ENCODE measurements at regions of chr18 and their contacts with region 1.

Region 1: DNA sequence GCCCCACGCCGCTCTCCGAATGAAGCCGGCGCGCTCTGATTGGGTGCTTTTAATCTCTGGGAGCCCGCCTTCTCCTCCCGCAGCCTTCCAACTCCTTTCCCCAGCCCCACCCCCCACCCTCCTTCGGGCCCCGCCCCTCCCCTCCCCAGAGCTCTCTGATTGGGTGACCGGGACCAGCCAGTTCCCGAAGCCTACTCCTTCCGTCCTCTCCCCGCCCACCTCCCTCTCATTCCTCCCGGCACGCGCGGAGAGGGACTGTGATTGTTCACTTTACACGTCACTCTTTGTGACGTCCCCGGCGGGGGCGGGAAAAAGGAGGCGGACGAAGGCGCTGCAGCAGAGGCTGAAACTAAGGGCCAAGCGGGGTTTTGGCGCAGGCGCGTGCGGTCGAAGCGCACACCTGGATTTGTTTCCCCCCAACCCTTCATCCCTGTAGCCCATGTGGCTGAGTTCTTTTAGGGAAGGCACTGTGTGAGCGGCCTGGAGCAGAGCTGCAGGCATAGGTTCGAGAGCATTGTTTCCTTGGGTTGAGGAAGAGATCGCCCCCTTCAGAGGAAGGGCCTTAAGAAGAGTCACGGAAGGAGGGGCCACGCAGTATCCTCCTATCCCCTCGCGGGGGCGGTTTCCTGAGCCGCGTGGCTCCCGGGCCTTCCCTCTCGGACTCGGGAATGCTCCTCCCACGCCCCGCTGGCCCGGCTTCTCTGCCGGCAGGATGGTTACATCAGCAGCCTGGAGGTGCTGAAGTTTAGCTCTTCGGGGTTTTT is at the start of gene MEX3C:
- DNase-seq: peak; percentile 100
- H3K4me3 ChIP-seq: peak within 1 kb of the TSS; percentile 76
- H3K27ac ChIP-seq: peak within 1 kb of the TSS; percentile 93
- H3K4me1 ChIP-seq: peaks cover 20% of the 10 kb centered on the region
- H3K27me3 ChIP-seq: no peaks in the 10 kb centered on the region
- CTCF ChIP-seq: peak; percentile 34
- total RNA-seq, gene MEX3C: 55.9 and 60.2 TPM in 2 replicates

Region 2: GRCh38 chr18:51110073-51110803 is 87.6 kb before region 1 on chr18:
- CTCF ChIA-PET with region 1: no interaction called
- POLR2A ChIA-PET with region 1: no interaction called
- intact Hi-C with region 1: no loop called
- DNase-seq: peak; percentile 73
- H3K4me3 ChIP-seq: peak overlapping the region; percentile 21
- H3K27ac ChIP-seq: no peak overlapping the region
- H3K4me1 ChIP-seq: no peaks in the 10 kb centered on the region
- H3K27me3 ChIP-seq: no peaks in the 10 kb centered on the region
- CTCF ChIP-seq: peak; percentile 89

Region 3: DNA sequence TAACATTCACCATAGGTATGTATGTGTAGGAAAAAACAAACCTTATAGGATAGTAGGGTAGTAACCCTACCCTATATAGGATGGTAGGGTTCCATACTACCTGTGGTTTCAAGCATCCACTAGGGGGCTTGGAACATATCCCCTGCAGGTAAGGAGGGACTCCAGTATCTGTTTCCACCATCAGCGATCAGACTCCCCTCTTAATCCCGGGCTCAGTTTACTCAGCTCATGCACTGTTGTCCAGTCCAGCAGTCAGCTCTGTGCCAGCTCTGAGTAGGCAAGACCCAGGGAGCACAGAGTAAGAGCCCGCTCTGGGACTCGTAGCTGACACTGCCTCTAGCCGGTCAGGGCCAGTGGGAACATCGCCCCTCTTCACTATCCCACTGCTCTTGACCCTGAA is 62.0 kb before region 1 on chr18:
- CTCF ChIA-PET with region 1: no interaction called
- POLR2A ChIA-PET with region 1: no interaction called
- intact Hi-C with region 1: loop called (anchors 5 kb)
- DNase-seq: no peak
- H3K4me3 ChIP-seq: no peak overlapping the region
- H3K27ac ChIP-seq: no peak overlapping the region
- H3K4me1 ChIP-seq: peaks cover 12% of the 10 kb centered on the region
- H3K27me3 ChIP-seq: no peaks in the 10 kb centered on the region
- CTCF ChIP-seq: peak; percentile 58

Region 4: DNA sequence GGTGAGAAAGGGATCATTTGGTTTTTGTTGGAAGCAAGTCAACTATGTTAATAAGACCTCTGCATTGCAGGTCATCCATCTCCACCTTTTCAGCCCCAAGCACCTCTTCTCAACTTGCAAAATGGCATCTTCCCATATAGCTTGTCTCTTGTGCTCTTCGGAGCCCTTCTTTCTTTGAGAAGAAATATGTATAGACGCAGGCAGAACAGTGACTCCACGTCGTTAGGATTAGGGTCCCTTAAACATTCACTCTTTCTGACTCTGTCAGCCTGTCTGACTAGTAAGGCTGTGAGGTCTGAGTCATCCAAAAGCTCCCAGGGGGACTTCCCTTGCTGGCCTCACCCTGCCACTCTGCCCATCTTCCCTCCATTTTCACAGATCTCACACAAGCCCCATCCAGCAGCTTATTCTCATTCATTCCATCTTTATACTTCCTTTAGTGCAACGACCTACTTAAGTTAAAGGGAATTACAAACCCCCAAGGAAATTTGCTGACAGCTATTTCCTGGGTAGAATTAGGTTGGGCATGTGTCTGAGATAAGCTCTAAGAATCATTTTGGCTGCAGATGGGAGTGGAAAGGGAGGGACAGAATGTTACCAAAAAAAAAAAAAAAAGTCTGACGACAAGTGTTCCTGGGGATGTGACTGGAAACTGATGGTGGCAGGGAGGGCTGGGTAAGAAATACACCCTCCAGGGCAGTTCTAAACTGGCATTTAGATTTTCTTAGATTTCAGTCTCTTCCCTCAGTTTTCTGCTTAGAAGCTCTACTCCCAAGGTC is 37.4 kb after region 1 on chr18:
- CTCF ChIA-PET with region 1: no interaction called
- POLR2A ChIA-PET with region 1: interaction called, 15 read pairs
- intact Hi-C with region 1: loop called (anchors 1 kb)
- DNase-seq: peak; percentile 98
- H3K4me3 ChIP-seq: no peak overlapping the region
- H3K27ac ChIP-seq: peak overlapping the region; percentile 79
- H3K4me1 ChIP-seq: peaks cover 30% of the 10 kb centered on the region
- H3K27me3 ChIP-seq: no peaks in the 10 kb centered on the region
- CTCF ChIP-seq: no peak

Region 5: DNA sequence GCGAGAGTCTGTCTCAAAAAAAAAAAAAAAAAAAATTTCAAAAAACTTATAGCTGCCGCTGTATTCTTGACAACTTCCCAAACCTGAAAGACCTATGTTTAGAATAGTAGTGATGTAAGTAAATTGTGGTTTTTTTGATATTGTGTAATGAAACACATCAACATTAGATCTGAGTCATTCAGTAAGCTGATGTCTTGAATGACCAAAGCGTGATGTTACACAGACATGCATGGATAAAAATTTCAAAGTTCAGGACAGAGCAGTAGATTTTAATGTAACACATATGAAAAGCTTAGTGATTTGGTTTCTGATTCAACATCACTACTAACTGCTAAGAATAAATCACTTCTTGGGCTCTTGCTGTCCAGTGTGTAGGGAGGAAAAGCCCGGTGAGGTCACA is 68.9 kb after region 1 on chr18:
- CTCF ChIA-PET with region 1: no interaction called
- POLR2A ChIA-PET with region 1: interaction called, 10 read pairs
- intact Hi-C with region 1: no loop called
- DNase-seq: no peak
- H3K4me3 ChIP-seq: no peak overlapping the region
- H3K27ac ChIP-seq: no peak overlapping the region
- H3K4me1 ChIP-seq: no peaks in the 10 kb centered on the region
- H3K27me3 ChIP-seq: no peaks in the 10 kb centered on the region
- CTCF ChIP-seq: no peak

Region 6: DNA sequence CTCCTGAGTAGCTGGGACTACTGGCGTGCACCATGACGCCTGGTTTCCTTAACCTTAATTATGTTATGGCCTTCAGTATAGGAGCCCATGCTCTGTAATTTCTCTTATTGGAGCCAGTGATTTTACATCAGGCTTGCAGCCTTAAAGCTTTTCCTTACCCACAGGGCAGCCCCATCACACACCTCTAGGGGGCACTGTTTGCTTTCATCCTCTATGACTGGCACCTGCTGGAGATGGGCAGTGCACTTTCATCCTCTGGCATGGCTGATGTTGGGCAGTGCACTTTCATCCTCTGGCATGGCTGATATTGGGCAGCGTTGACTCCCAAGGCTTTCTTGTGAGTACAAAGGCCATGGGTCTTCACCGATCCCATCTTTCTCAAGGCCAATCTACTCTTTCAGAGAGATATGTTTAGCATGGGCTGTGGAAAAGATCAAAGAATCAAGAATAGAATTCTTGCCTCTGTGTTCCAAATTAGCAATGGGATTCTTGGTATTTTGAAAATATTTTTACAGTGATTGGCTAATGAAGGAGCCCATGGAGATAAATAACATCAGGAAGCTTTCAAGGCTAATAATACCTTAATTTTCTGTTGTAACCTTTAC is 80.3 kb after region 1 on chr18:
- CTCF ChIA-PET with region 1: interaction called, 5 read pairs
- POLR2A ChIA-PET with region 1: no interaction called
- intact Hi-C with region 1: loop called (anchors 5 kb)
- DNase-seq: peak; percentile 73
- H3K4me3 ChIP-seq: no peak overlapping the region
- H3K27ac ChIP-seq: no peak overlapping the region
- H3K4me1 ChIP-seq: peaks cover 14% of the 10 kb centered on the region
- H3K27me3 ChIP-seq: no peaks in the 10 kb centered on the region
- CTCF ChIP-seq: peak; percentile 90

Region 7: GRCh38 chr18:51300912-51301311 is 103.1 kb after region 1 on chr18:
- CTCF ChIA-PET with region 1: no interaction called
- POLR2A ChIA-PET with region 1: no interaction called
- intact Hi-C with region 1: no loop called
- DNase-seq: no peak
- H3K4me3 ChIP-seq: no peak overlapping the region
- H3K27ac ChIP-seq: no peak overlapping the region
- H3K4me1 ChIP-seq: no peaks in the 10 kb centered on the region
- H3K27me3 ChIP-seq: no peaks in the 10 kb centered on the region
- CTCF ChIP-seq: no peak

Region 8: DNA sequence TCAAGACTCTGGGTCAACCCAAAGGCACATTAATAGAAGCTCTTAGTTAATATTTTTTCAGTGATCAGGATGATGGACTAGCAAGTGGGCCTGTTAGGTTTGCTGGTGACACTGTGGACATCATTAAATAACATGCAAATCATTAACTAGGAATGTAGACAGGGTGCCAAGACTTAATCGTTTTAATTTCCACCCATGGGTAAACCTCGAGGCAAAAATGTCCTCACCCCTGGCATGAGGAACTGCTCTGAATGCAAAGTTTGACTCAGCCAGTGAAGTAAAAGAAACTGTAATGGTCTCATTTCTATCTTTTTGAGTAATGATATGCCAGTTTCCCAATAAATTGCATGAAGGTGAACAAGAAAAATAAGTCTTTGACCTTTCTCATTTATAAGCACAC is 152.2 kb after region 1 on chr18:
- CTCF ChIA-PET with region 1: no interaction called
- POLR2A ChIA-PET with region 1: no interaction called
- intact Hi-C with region 1: no loop called
- DNase-seq: no peak
- H3K4me3 ChIP-seq: no peak overlapping the region
- H3K27ac ChIP-seq: no peak overlapping the region
- H3K4me1 ChIP-seq: peaks cover 11% of the 10 kb centered on the region
- H3K27me3 ChIP-seq: no peaks in the 10 kb centered on the region
- CTCF ChIP-seq: no peak